Lower lobe of right lung (tissue), 2 donors: ENCODE measurements at regions of chr14 and their contacts with region 1.

Region 1: DNA sequence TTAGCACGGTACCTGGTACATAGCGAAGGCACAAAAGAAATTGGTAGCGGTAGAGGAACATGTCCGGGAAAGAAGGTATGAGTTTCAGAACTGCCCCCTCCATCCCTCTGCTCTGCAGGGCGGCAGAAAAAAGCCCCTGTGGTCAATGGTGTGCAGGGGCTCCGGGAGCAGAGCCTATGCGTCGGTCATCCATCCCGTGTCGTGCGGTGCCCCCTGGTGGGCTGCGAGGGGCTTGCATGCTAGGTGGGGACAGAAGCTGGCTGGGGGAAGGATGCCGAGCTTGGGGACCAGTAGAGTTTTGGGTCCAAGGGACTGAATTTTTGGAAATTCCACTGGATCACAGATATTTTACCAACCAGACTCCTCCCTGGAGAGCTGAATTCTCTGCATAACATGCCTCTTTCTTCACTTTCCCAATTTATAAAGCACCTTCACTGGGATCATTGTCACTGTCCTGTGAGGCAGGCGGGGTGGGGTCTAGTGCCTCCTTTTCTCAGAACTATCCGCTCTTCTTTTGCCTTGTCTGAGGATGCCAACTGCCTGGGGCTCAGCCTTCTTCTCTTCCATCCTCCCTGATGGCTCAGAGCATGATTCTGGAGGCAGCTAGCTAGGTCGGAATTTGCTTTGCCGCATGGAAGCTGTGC is 148.7 kb downstream of the SMOC1 start:
- DNase-seq: peak; percentile 72
- ATAC-seq: peak; percentile 71 to 80
- H3K4me3 ChIP-seq: no peak overlapping the region
- H3K27ac ChIP-seq: no peak overlapping the region
- H3K4me1 ChIP-seq: no peaks in the 10 kb centered on the region
- H3K27me3 ChIP-seq: peaks cover 12% of the 10 kb centered on the region
- CTCF ChIP-seq: peak; percentile 89

Region 2: DNA sequence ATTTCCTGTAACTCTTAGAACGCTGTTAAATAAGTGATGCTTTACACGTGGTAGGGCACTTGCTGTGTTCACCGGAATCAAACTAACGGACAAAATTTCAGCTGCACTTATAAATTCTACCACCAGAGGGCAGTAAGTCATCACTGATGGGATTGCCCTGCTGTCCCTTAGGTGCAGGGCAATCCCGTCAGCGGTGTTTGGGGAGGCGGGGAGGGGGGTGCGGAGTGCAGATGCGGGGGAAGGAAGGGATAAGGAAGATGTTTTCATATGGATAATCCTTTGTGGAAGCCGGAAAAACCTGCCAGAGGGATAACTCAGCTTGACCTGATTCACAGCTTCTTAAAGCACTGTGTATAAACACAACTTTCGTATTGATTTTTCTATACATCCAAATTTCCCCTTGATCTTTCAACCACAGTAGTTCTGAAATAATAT is 209.1 kb before region 1 on chr14:
- intact Hi-C with region 1: loop called (anchors 5 kb)
- DNase-seq: no peak
- ATAC-seq: peak; percentile 78 to 84
- H3K4me3 ChIP-seq: no peak overlapping the region
- H3K27ac ChIP-seq: no peak overlapping the region
- H3K4me1 ChIP-seq: no peaks in the 10 kb centered on the region
- H3K27me3 ChIP-seq: peaks cover 16% of the 10 kb centered on the region
- CTCF ChIP-seq: peak; percentile 81